ENCODE measurements at regions of chr19 and their contacts with region 1.

Region 1: DNA sequence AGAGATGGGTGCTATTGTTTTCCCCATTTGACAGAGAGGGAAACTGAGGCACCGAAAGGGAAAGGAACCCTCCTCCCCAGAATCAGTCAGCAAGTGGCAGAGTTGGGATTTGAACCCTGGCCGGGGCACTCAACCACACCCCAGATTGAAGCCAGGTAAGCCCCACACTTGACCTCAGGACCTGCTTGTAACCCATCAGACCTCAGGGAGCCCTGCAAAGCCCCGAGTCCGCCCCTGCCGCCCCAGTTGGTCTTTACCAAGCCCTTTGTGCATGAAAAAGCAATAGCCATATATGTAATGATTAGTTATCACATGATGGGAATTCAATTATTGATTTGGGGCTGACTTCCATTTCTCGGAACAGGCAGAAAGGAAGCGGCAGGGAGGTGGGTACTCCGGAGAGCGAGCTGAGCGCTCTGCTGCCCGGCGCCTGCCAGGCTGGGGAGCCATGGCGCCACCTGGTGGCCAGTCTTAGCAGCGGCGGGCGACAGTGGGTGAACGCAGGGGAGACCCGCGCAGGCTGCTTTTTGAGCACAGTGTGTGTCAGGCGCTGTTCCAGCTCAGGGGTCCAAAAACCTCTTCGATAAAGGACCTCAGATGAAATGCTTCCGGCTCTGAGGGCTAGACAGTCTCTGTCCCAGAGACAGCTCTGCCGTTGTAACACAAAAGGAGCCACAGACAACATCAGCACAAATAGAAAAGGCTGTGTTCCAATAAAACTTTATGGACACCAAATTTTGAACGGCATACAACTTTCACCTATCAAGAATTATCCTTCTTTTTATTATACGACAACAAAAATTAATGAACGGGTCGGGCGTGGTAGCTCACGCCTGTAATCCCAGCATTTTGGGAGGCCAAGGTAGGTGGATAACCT is 82.9 kb upstream of the CACNA1A start:
- DNase-seq: peak; percentile 71 to 81 (median 77)
- H3K4me3 ChIP-seq: no peak overlapping the region
- H3K27ac ChIP-seq: no peak overlapping the region
- H3K4me1 ChIP-seq: peaks cover 0 to 2% (median 0%) of the 10 kb centered on the region in 4 experiments
- H3K27me3 ChIP-seq: peaks cover 0 to 2% (median 0%) of the 10 kb centered on the region in 5 experiments

Region 2: DNA sequence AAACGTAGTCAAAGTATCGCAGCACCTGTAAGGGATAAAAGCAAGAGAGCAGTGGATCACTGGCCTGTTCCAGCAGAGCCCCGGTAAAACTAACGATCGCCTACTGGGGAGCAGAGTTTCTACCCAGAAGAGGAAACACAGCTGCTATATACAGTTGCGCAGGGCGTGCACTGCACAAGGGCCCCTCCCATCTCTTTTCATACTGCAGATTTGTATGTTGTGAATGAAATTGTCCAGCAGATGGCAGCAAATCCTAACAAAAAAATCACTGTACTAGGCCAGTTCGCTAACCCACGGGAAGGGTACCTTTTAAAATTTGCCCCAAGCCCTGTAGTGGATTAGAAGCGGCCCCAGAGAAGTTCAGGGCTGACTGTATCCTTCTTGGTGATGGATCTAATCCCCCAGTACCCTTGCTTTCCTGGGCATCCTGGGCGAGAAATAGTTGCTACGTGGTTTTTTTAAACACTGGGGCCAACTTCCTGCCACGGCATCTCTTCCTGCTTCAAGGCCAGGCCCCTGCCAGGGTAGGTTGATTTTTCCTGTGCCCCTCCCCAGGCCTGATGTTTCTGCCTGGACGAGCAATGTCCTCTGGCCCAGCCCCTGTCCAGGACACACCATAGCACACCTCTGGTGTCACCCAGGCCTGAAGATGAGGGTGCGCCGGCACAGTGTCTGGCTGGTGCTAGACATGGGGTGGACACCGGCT is 311.9 kb before region 1 on chr19:
- CTCF ChIA-PET with region 1: interaction called, 24 read pairs
- POLR2A ChIA-PET with region 1: interaction called, 3 read pairs
- DNase-seq: peak; percentile 83 to 90 (median 85)
- H3K4me3 ChIP-seq: peak overlapping the region in 3 of 7 experiments; percentile 17 to 60 (median 50)
- H3K27ac ChIP-seq: no peak overlapping the region
- H3K4me1 ChIP-seq: peaks cover 0 to 10% (median 6%) of the 10 kb centered on the region in 4 experiments
- H3K27me3 ChIP-seq: peaks cover 0 to under 1% (median 0%) of the 10 kb centered on the region in 5 experiments

Region 3: GRCh38 chr19:13610039-13610691 is 21.0 kb after region 1 on chr19:
- CTCF ChIA-PET with region 1: no interaction called
- POLR2A ChIA-PET with region 1: no interaction called
- DNase-seq: peak in 1 of 3 donors; percentile 49
- H3K4me3 ChIP-seq: no peak overlapping the region
- H3K27ac ChIP-seq: no peak overlapping the region
- H3K4me1 ChIP-seq: peaks cover 0 to 2% (median 0%) of the 10 kb centered on the region in 4 experiments
- H3K27me3 ChIP-seq: peaks cover 0 to 4% (median 0%) of the 10 kb centered on the region in 5 experiments

Measured in common myeloid progenitor, CD34-positive (primary cell).